ENCODE measurements at regions of chr4 and their contacts with region 1.

Region 1: GRCh38 chr4:141807103-141807891 is 170.9 kb downstream of the IL15 start:
- DNase-seq: no peak
- H3K4me3 ChIP-seq: no peak overlapping the region
- H3K27ac ChIP-seq: no peak overlapping the region
- H3K4me1 ChIP-seq: peaks cover 24% of the 10 kb centered on the region
- H3K27me3 ChIP-seq: peaks cover 3% of the 10 kb centered on the region
- CTCF ChIP-seq: no peak

Region 2: GRCh38 chr4:141668200-141668910 is 138.9 kb before region 1 on chr4:
- CTCF ChIA-PET with region 1: no interaction called
- POLR2A ChIA-PET with region 1: no interaction called
- intact Hi-C with region 1: no loop called
- DNase-seq: no peak
- H3K4me3 ChIP-seq: no peak overlapping the region
- H3K27ac ChIP-seq: no peak overlapping the region
- H3K4me1 ChIP-seq: no peaks in the 10 kb centered on the region
- H3K27me3 ChIP-seq: no peaks in the 10 kb centered on the region
- CTCF ChIP-seq: no peak

Region 3: DNA sequence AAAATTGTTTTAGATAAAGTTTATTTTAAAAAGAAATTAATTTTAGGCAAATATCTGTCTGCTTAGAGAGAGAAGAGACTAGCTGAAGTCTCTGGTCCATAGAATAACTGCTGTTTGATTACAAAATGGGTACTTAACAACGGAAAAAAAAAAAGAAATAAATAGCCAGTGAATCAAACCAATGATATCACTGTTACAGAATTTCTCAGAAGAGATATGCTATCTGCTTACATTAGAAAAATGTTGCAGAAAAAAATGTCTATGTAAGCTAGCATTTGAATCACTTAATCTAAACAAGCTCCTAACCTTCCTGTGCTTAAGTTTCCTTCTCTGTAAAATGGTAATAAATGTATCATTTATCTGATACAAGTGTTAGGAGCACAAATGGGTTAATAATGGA is 19.0 kb after region 1 on chr4:
- CTCF ChIA-PET with region 1: no interaction called
- POLR2A ChIA-PET with region 1: no interaction called
- intact Hi-C with region 1: no loop called
- DNase-seq: no peak
- H3K4me3 ChIP-seq: no peak overlapping the region
- H3K27ac ChIP-seq: no peak overlapping the region
- H3K4me1 ChIP-seq: no peaks in the 10 kb centered on the region
- H3K27me3 ChIP-seq: peaks cover 8% of the 10 kb centered on the region
- CTCF ChIP-seq: no peak

Region 4: GRCh38 chr4:142248946-142249345 is 441.6 kb after region 1 on chr4:
- CTCF ChIA-PET with region 1: no interaction called
- POLR2A ChIA-PET with region 1: interaction called, 28 read pairs
- intact Hi-C with region 1: no loop called
- DNase-seq: no peak
- H3K4me3 ChIP-seq: no peak overlapping the region
- H3K27ac ChIP-seq: no peak overlapping the region
- H3K4me1 ChIP-seq: no peaks in the 10 kb centered on the region
- H3K27me3 ChIP-seq: no peaks in the 10 kb centered on the region
- CTCF ChIP-seq: no peak

Region 5: DNA sequence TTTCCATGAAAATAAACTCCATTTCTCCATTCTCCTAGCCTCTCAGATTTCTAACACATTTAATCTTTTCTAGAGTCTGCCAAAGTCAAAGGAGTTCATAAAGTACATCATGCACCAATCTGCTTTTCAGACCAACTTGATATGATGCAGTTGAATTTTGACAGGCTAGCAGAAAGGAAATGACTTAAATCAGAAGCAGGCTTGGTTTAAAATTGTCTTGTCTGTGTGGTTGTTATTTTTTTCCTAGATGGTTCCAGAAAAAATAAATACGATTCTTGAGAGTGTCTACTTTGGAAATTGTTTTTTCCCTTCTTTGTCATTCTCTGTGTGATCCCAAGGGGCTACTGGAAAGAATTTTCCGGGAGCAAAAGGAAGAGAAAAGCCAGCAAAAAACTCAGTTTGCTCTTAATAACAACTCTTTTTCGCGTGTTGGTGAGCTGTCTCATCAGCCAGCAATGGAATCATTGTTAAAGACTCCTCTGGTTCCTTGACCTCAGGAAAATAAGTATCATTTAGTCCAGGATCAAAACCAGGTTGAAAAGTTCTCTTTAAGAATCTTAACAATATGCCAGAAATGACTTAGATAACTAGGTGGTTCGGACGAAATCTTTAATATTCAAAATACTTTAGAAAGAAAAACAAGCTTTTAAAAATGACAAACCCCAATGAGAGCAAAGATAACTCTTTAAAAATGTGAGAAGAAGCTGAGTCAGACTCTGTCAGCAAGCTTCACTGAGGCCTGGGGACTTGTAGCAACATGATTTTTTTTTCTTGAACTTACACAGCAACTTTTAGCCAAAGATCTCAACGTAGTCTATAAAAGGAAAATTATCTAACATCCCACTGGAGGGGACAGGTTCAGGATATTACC is 1479.6 kb after region 1 on chr4:
- CTCF ChIA-PET with region 1: no interaction called
- POLR2A ChIA-PET with region 1: no interaction called
- intact Hi-C with region 1: no loop called
- DNase-seq: no peak
- H3K4me3 ChIP-seq: no peak overlapping the region
- H3K27ac ChIP-seq: no peak overlapping the region
- H3K4me1 ChIP-seq: peaks cover 3% of the 10 kb centered on the region
- H3K27me3 ChIP-seq: no peaks in the 10 kb centered on the region
- CTCF ChIP-seq: no peak